ENCODE measurements at regions of chr19 and their contacts with region 1.

Region 1: GRCh38 chr19:57389730-57390598 is at the start of gene ZNF548:
- DNase-seq: peak; percentile 98
- H3K4me3 Mint-ChIP-seq: peak within 1 kb of the TSS; percentile 87
- H3K27ac Mint-ChIP-seq: peak within 1 kb of the TSS; percentile 96
- H3K4me1 Mint-ChIP-seq: peaks cover 23% of the 10 kb centered on the region
- H3K27me3 Mint-ChIP-seq: no peaks in the 10 kb centered on the region
- total RNA-seq, gene ZNF548: 10.6 and 12.7 TPM in 2 replicates

Region 2: DNA sequence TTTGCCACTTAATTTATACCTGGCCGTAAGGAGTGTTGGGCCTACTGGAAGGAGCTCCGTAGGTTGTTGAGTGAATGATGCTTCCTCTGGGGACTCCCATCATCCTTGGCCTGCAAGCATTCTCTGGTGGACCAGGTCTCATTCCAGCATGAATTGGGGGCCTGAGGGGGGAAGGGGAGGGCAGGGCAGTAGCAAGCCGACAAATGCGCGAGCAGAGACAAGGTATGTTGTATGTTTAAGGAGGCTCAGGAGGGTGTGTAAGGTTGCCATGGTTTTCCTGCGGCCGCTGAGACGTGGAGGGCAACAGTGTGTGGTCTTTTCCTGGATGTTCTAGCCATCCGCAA is 197.9 kb before region 1 on chr19:
- intact Hi-C with region 1: no loop called
- DNase-seq: no peak
- H3K4me3 Mint-ChIP-seq: peak overlapping the region; percentile 93
- H3K27ac Mint-ChIP-seq: peak overlapping the region; percentile 85
- H3K4me1 Mint-ChIP-seq: peaks cover 20% of the 10 kb centered on the region
- H3K27me3 Mint-ChIP-seq: no peaks in the 10 kb centered on the region

Region 3: DNA sequence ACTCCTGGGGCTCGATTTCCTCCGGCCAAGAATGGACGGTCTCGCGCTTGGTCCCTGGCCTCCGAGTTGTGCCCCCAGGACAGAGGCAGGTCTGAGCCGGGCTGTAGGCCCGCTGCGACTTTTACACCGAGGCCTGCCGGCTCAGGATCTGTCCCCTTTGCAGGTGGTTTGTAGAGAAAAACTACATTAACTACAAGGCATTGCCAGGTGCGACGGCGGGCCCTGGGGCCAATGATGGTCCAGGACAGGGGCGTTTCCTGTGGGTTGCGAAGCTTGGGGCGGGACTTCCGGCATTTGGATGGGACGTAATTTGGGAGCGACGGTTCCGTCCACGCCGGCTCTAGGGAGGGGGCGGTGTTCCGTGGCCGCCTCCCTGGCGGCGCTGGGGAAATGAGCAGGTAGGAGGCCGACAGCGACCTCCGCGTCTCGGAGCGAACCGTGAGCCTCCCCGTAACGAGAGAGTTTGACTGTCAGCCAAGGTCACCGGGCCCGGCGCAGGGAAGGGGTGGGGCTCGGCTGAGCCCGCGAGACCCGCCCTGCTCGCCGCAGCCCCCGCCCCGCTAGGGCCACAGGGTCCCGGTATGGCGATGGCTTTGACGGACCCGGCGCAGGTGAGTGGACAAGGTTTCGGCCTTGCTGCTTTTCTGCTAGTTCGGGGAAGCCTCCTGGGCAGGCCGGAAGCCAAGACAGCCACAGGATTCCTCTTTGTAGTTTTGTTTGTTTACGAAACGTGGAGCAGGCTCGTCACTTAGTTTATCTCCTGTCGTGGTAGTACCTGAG is 149.5 kb before region 1 on chr19 and contains the start of gene ZNF805:
- intact Hi-C with region 1: loop called (anchors 1 kb)
- DNase-seq: peak; percentile 98
- H3K4me3 Mint-ChIP-seq: peak within 1 kb of the TSS; percentile 87
- H3K27ac Mint-ChIP-seq: peak within 1 kb of the TSS; percentile 95
- H3K4me1 Mint-ChIP-seq: peaks cover 21% of the 10 kb centered on the region
- H3K27me3 Mint-ChIP-seq: peaks cover 2% of the 10 kb centered on the region
- total RNA-seq, gene ZNF805: 7.6 and 8.6 TPM in 2 replicates

Region 4: GRCh38 chr19:57320180-57321084 is 69.5 kb before region 1 on chr19 and contains the start of gene ZNF543:
- intact Hi-C with region 1: loop called (anchors 1 kb)
- DNase-seq: peak; percentile 98
- H3K4me3 Mint-ChIP-seq: peak within 1 kb of the TSS; percentile 95
- H3K27ac Mint-ChIP-seq: peak within 1 kb of the TSS; percentile 94
- H3K4me1 Mint-ChIP-seq: peaks cover 24% of the 10 kb centered on the region
- H3K27me3 Mint-ChIP-seq: peaks cover 14% of the 10 kb centered on the region
- total RNA-seq, gene ZNF543: 4.9 and 5.3 TPM in 2 replicates

Region 5: GRCh38 chr19:57362997-57363705 is 26.8 kb before region 1 on chr19 and contains the starts of genes TRAPPC2B and ZNF547:
- intact Hi-C with region 1: loop called (anchors 1 kb)
- DNase-seq: peak; percentile 100
- H3K4me3 Mint-ChIP-seq: peak within 1 kb of the TSS; percentile 87
- H3K27ac Mint-ChIP-seq: peak within 1 kb of the TSS; percentile 92
- H3K4me1 Mint-ChIP-seq: peaks cover 14% of the 10 kb centered on the region
- H3K27me3 Mint-ChIP-seq: peaks cover 3% of the 10 kb centered on the region
- total RNA-seq, gene TRAPPC2B: 4.1 and 4.3 TPM in 2 replicates
- total RNA-seq, gene ZNF547: 1.3 and 1.6 TPM in 2 replicates

Region 6: GRCh38 chr19:57435062-57435978 is 45.4 kb after region 1 on chr19 and contains the start of gene ZNF749:
- intact Hi-C with region 1: loop called (anchors 1 kb)
- DNase-seq: peak; percentile 99
- H3K4me3 Mint-ChIP-seq: peak within 1 kb of the TSS; percentile 95
- H3K27ac Mint-ChIP-seq: peak within 1 kb of the TSS; percentile 95
- H3K4me1 Mint-ChIP-seq: peaks cover 19% of the 10 kb centered on the region
- H3K27me3 Mint-ChIP-seq: peaks cover 2% of the 10 kb centered on the region
- total RNA-seq, gene ZNF749: 22.5 and 26.5 TPM in 2 replicates

Region 7: GRCh38 chr19:57578487-57579205 is 188.7 kb after region 1 on chr19 and contains the start of gene ZNF416:
- intact Hi-C with region 1: loop called (anchors 1 kb)
- DNase-seq: peak; percentile 98
- H3K4me3 Mint-ChIP-seq: peak within 1 kb of the TSS; percentile 84
- H3K27ac Mint-ChIP-seq: peak within 1 kb of the TSS; percentile 73
- H3K4me1 Mint-ChIP-seq: peaks cover 19% of the 10 kb centered on the region
- H3K27me3 Mint-ChIP-seq: no peaks in the 10 kb centered on the region
- total RNA-seq, gene ZNF416: 3.4 and 3.5 TPM in 2 replicates

Measured in activated CD4-positive, alpha-beta T cell treated with anti-CD3 and anti-CD28 coated beads, Interleukin-2, amount 10 ng/mL, durations not matched to agents 24 days and 14 days (primary cell).